ENCODE measurements at regions of chr1 and their contacts with region 1.

Region 1: DNA sequence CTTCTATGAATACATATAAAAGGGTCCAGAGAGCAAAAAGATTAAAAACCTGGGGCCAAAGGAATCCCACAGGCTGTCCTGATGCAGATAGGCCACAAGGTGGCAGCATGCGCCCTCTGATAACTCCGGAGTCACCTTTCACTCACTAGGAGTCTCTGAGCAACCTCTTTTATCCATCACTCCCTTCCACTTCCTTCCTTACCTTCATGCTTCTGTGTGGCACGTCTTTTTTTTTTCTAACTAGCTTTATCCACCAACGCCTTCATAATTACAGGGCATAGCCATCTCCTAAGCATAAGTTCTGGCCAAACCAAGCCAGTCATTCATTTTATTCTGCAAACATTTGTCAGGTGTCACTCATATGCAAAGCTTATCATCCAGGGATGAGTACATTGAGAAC is 3.9 kb upstream of the PGLYRP4 start:
- DNase-seq: peak; percentile 69 to 77
- ATAC-seq: peak; percentile 60 to 76; a peak in 5 of 6 replicates
- H3K4me3 ChIP-seq: no peak overlapping the region
- H3K27ac ChIP-seq: no peak overlapping the region
- H3K4me1 ChIP-seq: no peaks in the 10 kb centered on the region
- CTCF ChIP-seq: peak; percentile 94
- EP300 ChIP-seq: no peak
- POLR2A ChIP-seq: no peak
- RAD21 ChIP-seq: peak; percentile 90 to 92

Region 2: DNA sequence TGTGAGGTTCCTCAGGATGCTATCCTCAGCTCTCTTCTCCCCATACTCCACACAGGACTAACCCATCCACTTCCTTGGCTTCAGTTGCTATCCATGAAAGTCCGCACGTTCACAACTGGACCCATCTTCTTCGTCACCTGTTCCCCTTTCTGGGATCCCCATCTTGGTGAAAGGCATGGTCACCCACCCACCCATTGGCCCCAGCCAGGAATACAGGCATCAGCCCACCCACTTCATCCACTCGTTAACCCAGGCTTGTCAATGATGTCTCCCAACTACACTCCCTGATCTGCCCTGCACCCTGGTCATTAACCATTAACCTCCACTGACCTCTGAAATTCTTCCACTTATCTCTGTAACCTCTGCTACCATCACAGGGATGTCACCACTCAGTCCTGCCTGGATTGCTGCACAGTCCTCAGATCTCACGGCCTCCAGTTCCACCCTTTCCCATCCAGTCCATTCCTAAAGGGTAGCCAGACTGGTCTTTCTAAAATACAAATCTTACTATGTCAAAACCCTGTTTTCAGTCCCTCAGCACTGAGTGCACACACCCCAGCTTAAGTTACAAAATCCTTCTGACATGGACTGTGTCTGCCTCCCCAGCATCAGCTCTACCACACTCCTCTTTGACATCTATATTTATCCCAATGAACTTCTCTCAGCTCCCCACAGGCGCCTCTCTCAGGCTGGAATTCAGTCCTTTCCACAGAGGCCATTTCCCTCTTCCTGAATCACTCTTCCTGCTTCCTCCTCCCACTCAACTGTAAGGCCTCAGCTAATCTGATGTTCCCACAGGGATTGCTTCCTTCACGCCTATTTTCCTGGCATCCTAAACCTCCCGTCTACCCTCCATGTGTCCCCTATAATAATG is 14.3 kb before region 1 on chr1:
- CTCF ChIA-PET with region 1: interaction called, 41 read pairs
- POLR2A ChIA-PET with region 1: no interaction called
- DNase-seq: no peak
- ATAC-seq: no peak
- H3K4me3 ChIP-seq: no peak overlapping the region
- H3K27ac ChIP-seq: no peak overlapping the region
- H3K4me1 ChIP-seq: no peaks in the 10 kb centered on the region
- CTCF ChIP-seq: no peak
- EP300 ChIP-seq: no peak
- POLR2A ChIP-seq: no peak
- RAD21 ChIP-seq: no peak

Region 3: GRCh38 chr1:153375511-153375910 is 23.0 kb after region 1 on chr1 and contains the start of gene S100A12:
- CTCF ChIA-PET with region 1: interaction called, 41 read pairs
- POLR2A ChIA-PET with region 1: no interaction called
- DNase-seq: peak in 1 of 2 experiments; percentile 13
- ATAC-seq: peak; percentile 74 to 79
- H3K4me3 ChIP-seq: no peak within 1 kb of the TSS
- H3K27ac ChIP-seq: peak within 1 kb of the TSS in 1 of 2 experiments; percentile 33; a peak in 2 of 6 replicates
- H3K4me1 ChIP-seq: peaks cover 5% of the 10 kb centered on the region; the same call in 1 of the 3 replicates
- CTCF ChIP-seq: no peak
- EP300 ChIP-seq: no peak
- POLR2A ChIP-seq: no peak
- RAD21 ChIP-seq: no peak
- polyA plus RNA-seq, gene S100A12: not detected in 2 replicates

Region 4: DNA sequence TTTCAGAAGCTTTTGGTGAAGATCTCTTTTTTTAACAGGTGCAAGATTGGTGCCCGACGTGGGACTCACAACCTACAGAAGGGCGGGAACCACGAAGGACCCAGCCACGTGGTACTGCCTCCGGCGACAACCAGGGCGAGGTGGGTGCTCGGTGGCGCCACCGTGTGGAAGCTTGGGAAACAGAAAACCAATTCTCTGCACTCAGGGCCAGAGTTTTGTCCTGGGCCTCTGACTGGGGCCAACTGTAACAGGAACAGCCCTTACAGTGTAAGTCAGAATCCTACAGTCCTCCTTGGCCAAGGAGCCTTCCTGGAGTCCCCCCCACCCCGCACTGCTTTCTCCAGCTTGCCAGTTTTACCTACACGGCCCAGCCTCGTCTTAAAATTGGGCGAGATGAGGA is 52.2 kb after region 1 on chr1:
- CTCF ChIA-PET with region 1: interaction called, 15 read pairs
- POLR2A ChIA-PET with region 1: no interaction called
- DNase-seq: peak; percentile 40 to 47
- ATAC-seq: peak in 1 of 2 experiments; percentile 83; a peak in 3 of 6 replicates
- H3K4me3 ChIP-seq: no peak overlapping the region
- H3K27ac ChIP-seq: no peak overlapping the region
- H3K4me1 ChIP-seq: no peaks in the 10 kb centered on the region
- CTCF ChIP-seq: peak; percentile 25; the same call in 1 of the 3 replicates
- EP300 ChIP-seq: no peak
- POLR2A ChIP-seq: no peak
- RAD21 ChIP-seq: peak in 1 of 2 experiments; percentile 27; a peak in 2 of 5 replicates

Region 5: DNA sequence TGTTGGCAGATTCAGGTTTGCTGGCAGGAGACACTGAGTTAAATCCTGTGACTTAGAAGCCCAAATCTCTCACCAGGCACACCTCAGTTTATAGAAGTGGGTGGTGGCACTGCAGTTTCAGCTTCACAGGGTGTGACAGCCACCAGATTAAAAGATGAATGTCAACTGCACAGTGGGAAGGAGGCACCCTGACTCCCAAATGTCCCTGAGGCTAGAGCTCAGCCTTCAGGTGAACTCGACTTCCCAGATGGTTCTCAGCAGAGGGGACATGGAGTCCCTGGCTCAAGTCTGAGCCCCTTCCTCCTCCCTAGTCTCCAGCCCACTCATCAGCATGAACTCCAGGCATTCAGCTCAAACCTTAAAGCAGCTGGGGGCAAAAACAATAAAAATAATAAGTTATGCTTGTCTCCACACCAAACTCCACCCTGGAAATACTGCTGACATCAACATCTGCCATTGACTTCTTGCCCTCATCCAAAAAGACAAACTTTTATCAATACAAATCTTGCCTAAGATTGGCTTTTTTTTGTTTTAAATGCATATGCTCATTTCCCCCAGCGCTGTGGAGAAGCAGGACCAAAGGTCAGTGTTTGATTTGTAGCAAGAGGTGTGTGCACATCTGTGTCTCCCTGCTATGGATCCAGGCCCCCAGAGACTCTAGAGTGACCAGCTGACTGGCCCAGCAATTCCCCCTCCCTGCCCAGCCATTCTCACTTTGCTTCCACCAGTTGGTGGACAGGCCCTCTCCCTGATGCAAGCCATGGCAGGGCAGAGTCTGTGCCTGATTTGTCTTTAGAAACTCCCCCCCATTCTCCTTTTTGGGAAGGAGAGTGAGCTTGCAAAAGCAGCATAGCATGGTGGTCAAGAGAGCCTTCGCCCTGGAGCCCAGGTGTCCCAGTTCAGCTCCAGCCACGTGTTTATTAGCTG is 126.4 kb after region 1 on chr1:
- CTCF ChIA-PET with region 1: interaction called, 731 read pairs
- POLR2A ChIA-PET with region 1: no interaction called
- DNase-seq: no peak
- ATAC-seq: no peak; a peak in 1 of 6 replicates
- H3K4me3 ChIP-seq: no peak overlapping the region
- H3K27ac ChIP-seq: no peak overlapping the region
- H3K4me1 ChIP-seq: peaks cover 16% of the 10 kb centered on the region
- CTCF ChIP-seq: no peak
- EP300 ChIP-seq: no peak
- POLR2A ChIP-seq: no peak
- RAD21 ChIP-seq: no peak

Measured in A549 (cell line).